Calu3 (cell line): ENCODE measurements at regions of chr1 and their contacts with region 1.

Region 1: GRCh38 chr1:43529206-43529731 is 1.4 kb upstream of the PTPRF start:
- DNase-seq: peak; percentile 88
- H3K4me3 Mint-ChIP-seq: no peak overlapping the region
- H3K27ac Mint-ChIP-seq: no peak overlapping the region
- H3K4me1 Mint-ChIP-seq: peaks cover 61% of the 10 kb centered on the region
- H3K27me3 Mint-ChIP-seq: no peaks in the 10 kb centered on the region
- CTCF ChIP-seq: peak; percentile 88

Region 2: GRCh38 chr1:42822800-42823392 is 706.4 kb before region 1 on chr1:
- CTCF ChIA-PET with region 1: no interaction called
- intact Hi-C with region 1: no loop called
- DNase-seq: no peak
- H3K4me3 Mint-ChIP-seq: no peak overlapping the region
- H3K27ac Mint-ChIP-seq: no peak overlapping the region
- H3K4me1 Mint-ChIP-seq: no peaks in the 10 kb centered on the region
- H3K27me3 Mint-ChIP-seq: no peaks in the 10 kb centered on the region
- CTCF ChIP-seq: no peak

Region 3: DNA sequence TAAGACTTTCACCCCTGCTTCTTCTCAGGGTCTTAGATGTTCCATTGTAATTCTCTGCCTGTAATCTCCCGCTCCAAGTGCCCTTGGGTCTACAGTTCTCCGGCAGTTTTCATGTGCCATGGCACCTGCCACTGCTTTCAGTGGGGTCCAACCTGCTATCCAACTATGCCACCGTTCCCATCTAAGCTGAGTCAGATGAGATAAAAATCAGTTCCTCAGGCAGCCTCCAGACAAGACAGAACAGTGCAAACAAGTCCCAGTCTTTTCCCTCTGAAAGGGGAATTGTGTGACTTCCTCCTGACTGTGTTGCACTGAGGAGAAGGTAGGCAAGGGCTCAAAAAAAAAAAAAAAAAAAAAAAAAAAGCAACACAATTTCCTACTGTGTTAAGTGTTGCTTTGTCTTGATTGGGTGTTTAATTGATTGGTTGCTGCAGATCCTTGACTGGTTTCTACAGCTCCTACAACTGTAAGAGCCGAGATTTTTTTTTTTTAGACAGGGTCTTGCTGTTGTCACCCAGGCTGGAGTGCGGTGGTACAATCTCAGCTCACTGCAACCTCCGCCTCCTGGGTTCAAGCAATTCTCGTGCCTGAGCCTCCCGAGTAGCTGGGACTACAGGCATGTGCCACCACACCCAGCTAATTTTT is 407.9 kb before region 1 on chr1:
- CTCF ChIA-PET with region 1: no interaction called
- intact Hi-C with region 1: no loop called
- DNase-seq: no peak
- H3K4me3 Mint-ChIP-seq: no peak overlapping the region
- H3K27ac Mint-ChIP-seq: no peak overlapping the region
- H3K4me1 Mint-ChIP-seq: no peaks in the 10 kb centered on the region
- H3K27me3 Mint-ChIP-seq: peaks cover 26% of the 10 kb centered on the region
- CTCF ChIP-seq: no peak

Region 4: DNA sequence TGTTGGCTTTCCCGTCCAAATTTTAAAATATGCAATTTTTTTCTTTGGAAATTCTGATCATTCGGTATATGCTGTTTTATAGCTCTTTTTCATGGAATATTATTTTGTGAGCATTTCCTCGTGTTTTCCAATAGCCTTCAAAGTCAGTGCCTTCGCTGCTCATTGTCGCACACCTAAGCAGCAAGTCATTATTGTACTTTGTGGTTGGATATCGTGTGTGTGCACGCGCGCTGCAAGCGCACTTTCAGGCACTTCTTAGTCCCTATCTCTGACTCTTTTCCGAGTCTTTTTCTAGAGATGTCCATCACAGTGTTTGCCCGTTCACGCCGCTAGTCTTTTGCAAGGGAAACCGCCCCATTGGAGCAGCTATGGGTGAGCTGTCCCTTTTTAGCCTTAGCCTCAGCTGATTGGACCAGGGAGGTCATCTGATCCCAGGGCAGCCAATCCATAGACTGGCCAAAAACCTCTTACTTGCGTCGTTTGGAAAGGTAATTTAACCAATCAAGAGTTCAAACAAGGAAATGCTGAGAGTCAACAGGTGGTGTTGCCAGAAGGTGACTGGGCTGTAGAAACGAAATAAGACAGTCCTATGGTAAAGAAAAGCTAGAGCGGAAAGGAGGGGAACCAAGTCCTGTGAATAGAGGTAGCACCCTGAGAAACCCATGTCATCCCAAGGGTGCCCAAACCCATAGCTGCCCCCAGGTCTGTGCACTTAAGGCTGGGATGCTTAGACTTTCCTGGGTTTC is 74.8 kb before region 1 on chr1:
- CTCF ChIA-PET with region 1: interaction called, 4 read pairs
- intact Hi-C with region 1: loop called (anchors 5 kb)
- DNase-seq: peak; percentile 84
- H3K4me3 Mint-ChIP-seq: peak overlapping the region; percentile 49
- H3K27ac Mint-ChIP-seq: peak overlapping the region; percentile 90
- H3K4me1 Mint-ChIP-seq: peaks cover 22% of the 10 kb centered on the region
- H3K27me3 Mint-ChIP-seq: no peaks in the 10 kb centered on the region
- CTCF ChIP-seq: no peak

Region 5: DNA sequence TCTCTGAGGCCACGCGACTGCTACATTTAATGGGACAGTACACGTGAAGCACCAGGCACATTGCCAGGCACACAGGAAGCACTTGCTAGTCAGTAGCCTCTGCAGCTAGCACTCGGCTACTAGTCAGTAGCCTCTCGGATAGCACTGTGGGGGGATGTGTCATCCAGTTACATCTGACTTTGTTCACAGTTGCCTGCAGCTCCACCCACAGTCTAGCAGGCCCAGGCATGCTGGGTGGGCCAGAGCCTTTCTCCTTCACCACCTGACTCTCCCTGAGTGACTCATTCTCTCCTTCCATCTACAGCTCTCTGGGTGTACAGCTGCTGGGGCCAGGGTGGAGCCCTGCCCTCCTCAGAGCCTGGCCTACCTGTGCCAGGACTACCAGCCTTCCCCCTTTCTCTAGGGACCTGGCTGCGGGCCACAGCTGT is 52.9 kb after region 1 on chr1:
- CTCF ChIA-PET with region 1: interaction called, 4 read pairs
- intact Hi-C with region 1: loop called (anchors 5 kb)
- DNase-seq: peak; percentile 81
- H3K4me3 Mint-ChIP-seq: no peak overlapping the region
- H3K27ac Mint-ChIP-seq: peak overlapping the region; percentile 63
- H3K4me1 Mint-ChIP-seq: peaks cover 31% of the 10 kb centered on the region
- H3K27me3 Mint-ChIP-seq: no peaks in the 10 kb centered on the region
- CTCF ChIP-seq: no peak